Natural killer cell (primary cell): ENCODE measurements at regions of chr15 and their contacts with region 1.

Region 1: GRCh38 chr15:42495361-42496212 is at the start of gene SNAP23:
- DNase-seq: peak; percentile 75 to 91
- ATAC-seq: peak; percentile 91 to 96 (median 93)
- H3K4me3 ChIP-seq: peak within 1 kb of the TSS; percentile 80
- H3K4me3 Mint-ChIP-seq: peak within 1 kb of the TSS; percentile 98
- H3K27ac ChIP-seq: peak within 1 kb of the TSS; percentile 64
- H3K27ac Mint-ChIP-seq: peak within 1 kb of the TSS; percentile 89 to 95
- H3K4me1 ChIP-seq: peaks cover 40% of the 10 kb centered on the region
- H3K4me1 Mint-ChIP-seq: peaks cover 53 to 66% of the 10 kb centered on the region in 2 donors
- H3K27me3 ChIP-seq: no peaks in the 10 kb centered on the region
- H3K27me3 Mint-ChIP-seq: no peaks in the 10 kb centered on the region
- CTCF ChIP-seq: no peak
- total RNA-seq, gene SNAP23: 72.7 to 85.2 (median 82.7) TPM

Region 2: GRCh38 chr15:42273102-42273899 is 222.3 kb before region 1 on chr15 and contains the starts of genes GANC and TMEM87A:
- intact Hi-C with region 1: loop called (anchors 1 kb)
- DNase-seq: peak; percentile 90 to 99
- ATAC-seq: peak; percentile 93 to 98 (median 94)
- H3K4me3 ChIP-seq: peak within 1 kb of the TSS; percentile 96
- H3K4me3 Mint-ChIP-seq: peak within 1 kb of the TSS; percentile 91
- H3K27ac ChIP-seq: peak within 1 kb of the TSS; percentile 92
- H3K27ac Mint-ChIP-seq: peak within 1 kb of the TSS; percentile 95 to 99
- H3K4me1 ChIP-seq: peaks cover 13% of the 10 kb centered on the region
- H3K4me1 Mint-ChIP-seq: peaks cover 49 to 56% of the 10 kb centered on the region in 2 donors
- H3K27me3 ChIP-seq: no peaks in the 10 kb centered on the region
- H3K27me3 Mint-ChIP-seq: no peaks in the 10 kb centered on the region
- CTCF ChIP-seq: no peak
- total RNA-seq, gene GANC: 23.5 to 31.3 (median 24.3) TPM
- total RNA-seq, gene TMEM87A: 70.8 to 76.4 (median 73.7) TPM

Region 3: GRCh38 chr15:42548253-42549031 is 52.9 kb after region 1 on chr15 and contains the starts of genes HAUS2 and LRRC57:
- intact Hi-C with region 1: loop called (anchors 5 kb)
- DNase-seq: peak; percentile 85 to 93
- ATAC-seq: peak; percentile 86 to 91 (median 90)
- H3K4me3 ChIP-seq: peak within 1 kb of the TSS; percentile 96
- H3K4me3 Mint-ChIP-seq: peak within 1 kb of the TSS; percentile 99
- H3K27ac ChIP-seq: peak within 1 kb of the TSS; percentile 84
- H3K27ac Mint-ChIP-seq: peak within 1 kb of the TSS; percentile 94 to 96
- H3K4me1 ChIP-seq: peaks cover 23% of the 10 kb centered on the region
- H3K4me1 Mint-ChIP-seq: peaks cover 36 to 37% of the 10 kb centered on the region in 2 donors
- H3K27me3 ChIP-seq: no peaks in the 10 kb centered on the region
- H3K27me3 Mint-ChIP-seq: no peaks in the 10 kb centered on the region
- CTCF ChIP-seq: no peak
- total RNA-seq, gene HAUS2: 24.9 to 26.2 (median 26.1) TPM
- total RNA-seq, gene LRRC57: 29.4 to 43.9 (median 29.4) TPM

Region 4: DNA sequence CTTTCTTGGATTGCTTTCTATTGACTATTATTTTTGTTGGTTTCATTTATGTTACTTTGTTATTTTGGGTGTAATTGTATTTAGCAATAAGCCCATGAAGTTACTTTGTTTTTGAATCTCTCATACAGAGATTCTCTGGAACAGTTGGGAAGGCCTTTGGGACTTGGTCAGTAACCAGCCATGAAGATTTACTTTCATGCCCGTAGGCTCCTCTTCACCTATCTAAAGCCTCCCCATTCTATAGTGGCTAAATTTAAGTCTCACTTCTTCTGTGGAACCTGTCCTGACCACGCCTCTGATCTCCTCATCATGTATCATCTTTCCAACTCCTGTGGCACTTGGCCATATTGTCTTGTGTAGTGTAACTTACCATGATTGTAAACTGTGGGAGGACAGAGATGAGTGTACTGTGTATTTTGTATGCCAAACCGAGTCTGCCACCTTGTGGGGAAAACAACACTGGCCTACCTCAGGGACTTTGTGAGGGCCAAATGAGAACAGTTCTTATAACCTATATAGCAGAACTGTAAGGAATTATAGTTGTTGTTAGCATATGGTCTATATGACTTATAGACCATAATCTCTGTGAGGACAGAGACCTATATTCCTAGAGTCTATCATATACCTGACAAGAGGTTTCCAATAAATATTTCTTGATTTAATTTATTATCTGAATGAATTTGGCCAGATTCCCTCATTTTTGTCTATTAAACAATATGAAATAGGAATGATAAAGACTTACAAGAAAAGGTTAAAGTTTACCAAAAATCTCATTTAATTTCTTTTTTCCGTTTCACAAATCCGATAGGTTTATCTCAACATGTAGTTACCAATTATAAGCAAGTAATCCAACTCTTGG is 154.8 kb after region 1 on chr15:
- intact Hi-C with region 1: loop called (anchors 10 kb)
- DNase-seq: peak; percentile 45 to 76
- ATAC-seq: peak; percentile 88 to 99 (median 96)
- H3K4me3 ChIP-seq: no peak overlapping the region
- H3K4me3 Mint-ChIP-seq: no peak overlapping the region
- H3K27ac ChIP-seq: no peak overlapping the region
- H3K27ac Mint-ChIP-seq: peak overlapping the region in 1 of 2 donors; percentile 47
- H3K4me1 ChIP-seq: no peaks in the 10 kb centered on the region
- H3K4me1 Mint-ChIP-seq: peaks cover 10 to 13% of the 10 kb centered on the region in 2 donors
- H3K27me3 ChIP-seq: no peaks in the 10 kb centered on the region
- H3K27me3 Mint-ChIP-seq: no peaks in the 10 kb centered on the region
- CTCF ChIP-seq: peak; percentile 73

Region 5: GRCh38 chr15:42920519-42921227 is 425.1 kb after region 1 on chr15 and contains the start of gene TTBK2:
- intact Hi-C with region 1: loop called (anchors 5 kb)
- DNase-seq: peak; percentile 94 to 100
- ATAC-seq: peak; percentile 95 to 98 (median 96)
- H3K4me3 ChIP-seq: peak within 1 kb of the TSS; percentile 50
- H3K4me3 Mint-ChIP-seq: peak within 1 kb of the TSS; percentile 97
- H3K27ac ChIP-seq: peak within 1 kb of the TSS; percentile 48
- H3K27ac Mint-ChIP-seq: peak within 1 kb of the TSS; percentile 89 to 91
- H3K4me1 ChIP-seq: peaks cover 11% of the 10 kb centered on the region
- H3K4me1 Mint-ChIP-seq: peaks cover 26 to 28% of the 10 kb centered on the region in 2 donors
- H3K27me3 ChIP-seq: no peaks in the 10 kb centered on the region
- H3K27me3 Mint-ChIP-seq: peaks cover 0 to 2% of the 10 kb centered on the region in 2 donors
- CTCF ChIP-seq: no peak
- total RNA-seq, gene TTBK2: 17.5 to 25.9 (median 25.7) TPM